ENCODE measurements at regions of chr16 and their contacts with region 1.

Region 1: DNA sequence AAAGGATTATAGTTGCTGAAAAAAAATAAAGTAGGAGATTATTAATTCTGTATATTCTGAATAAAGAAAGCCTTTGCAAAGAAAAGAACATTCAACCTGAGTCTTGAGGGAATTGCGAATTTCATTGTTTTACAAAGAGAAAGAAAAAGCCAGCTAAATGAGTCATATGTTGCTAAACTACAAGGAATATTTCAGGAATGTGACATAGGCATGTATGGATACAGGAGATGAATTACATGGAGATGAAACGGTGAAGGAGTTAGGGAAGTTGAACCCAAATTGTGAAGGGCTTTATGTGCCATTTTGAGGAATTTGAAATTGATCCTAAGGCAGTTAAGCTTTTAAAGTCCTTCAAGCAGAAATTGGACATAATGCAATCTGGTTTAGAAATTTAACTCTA is 177.3 kb upstream of the RBL2 start:
- DNase-seq: no peak
- H3K4me3 ChIP-seq: no peak overlapping the region
- H3K27ac ChIP-seq: no peak overlapping the region
- H3K4me1 ChIP-seq: no peaks in the 10 kb centered on the region
- H3K27me3 ChIP-seq: no peaks in the 10 kb centered on the region
- CTCF ChIP-seq: no peak

Region 2: DNA sequence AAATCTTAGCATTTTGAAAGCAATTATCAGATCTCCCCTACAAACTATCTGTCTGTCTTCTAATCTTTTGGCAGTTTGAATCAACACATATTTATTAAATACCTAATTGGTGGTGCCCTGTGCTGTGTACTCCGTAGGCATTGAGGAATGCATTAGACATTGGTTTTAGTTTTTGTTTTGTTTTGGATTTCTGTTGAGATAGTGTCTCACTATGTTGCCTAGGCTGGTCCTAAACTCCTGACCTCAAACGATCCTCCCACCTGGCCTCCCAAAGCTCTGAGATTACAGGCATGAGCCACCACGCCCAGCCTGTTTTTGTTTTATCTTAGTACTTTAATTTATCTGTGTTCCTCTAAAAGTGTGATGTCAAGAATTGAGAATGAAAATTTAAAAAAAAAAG is 52.5 kb after region 1 on chr16:
- intact Hi-C with region 1: loop called (anchors 10 kb)
- DNase-seq: no peak
- H3K4me3 ChIP-seq: no peak overlapping the region
- H3K27ac ChIP-seq: no peak overlapping the region
- H3K4me1 ChIP-seq: no peaks in the 10 kb centered on the region
- H3K27me3 ChIP-seq: no peaks in the 10 kb centered on the region
- CTCF ChIP-seq: no peak

Measured in colonic mucosa (tissue), 4 donors.